Ascending aorta (tissue), 2 donors: ENCODE measurements at regions of chr4 and their contacts with region 1.

Region 1: GRCh38 chr4:74444891-74445642 is at the start of gene AREG:
- DNase-seq: peak; percentile 54 to 90
- H3K4me3 ChIP-seq: peak within 1 kb of the TSS; percentile 64 to 67
- H3K27ac ChIP-seq: peak within 1 kb of the TSS; percentile 52 to 66
- H3K4me1 ChIP-seq: no peaks in the 10 kb centered on the region
- H3K27me3 ChIP-seq: no peaks in the 10 kb centered on the region
- CTCF ChIP-seq: peak in 2 of 3 experiments; percentile 36 to 61
- total RNA-seq, gene AREG: 4.0 TPM

Region 2: DNA sequence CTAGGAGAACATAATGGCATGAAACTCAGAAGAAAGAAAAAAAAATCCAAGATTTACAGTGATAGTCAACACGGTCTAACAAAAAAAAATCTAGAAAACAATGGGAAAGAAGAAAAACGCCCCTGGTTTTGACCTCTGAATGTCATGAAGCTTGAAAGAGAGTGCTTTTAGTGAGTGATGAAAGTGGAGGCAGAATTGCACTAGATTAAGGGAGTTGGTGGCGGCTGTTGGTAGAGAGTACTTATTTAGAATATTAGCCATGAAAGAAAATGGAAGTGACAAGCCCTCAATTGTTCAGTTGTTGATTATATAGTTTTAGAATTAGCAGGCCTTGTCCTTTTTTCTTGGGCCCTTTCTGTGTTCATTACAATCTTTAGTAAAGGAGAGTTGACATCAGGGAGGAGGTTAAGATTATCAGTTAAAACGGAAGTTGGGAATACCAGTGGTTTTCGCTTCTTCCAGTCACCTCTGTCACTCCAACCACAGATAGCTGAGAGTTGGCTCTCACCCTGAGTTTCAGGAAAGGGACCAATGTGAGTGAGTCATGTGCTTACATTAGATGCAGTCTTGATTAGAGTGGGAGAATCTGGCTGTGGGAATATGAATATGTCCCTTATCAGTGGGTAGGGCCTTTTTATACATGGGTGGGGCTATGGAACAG is 50.5 kb before region 1 on chr4:
- intact Hi-C with region 1: no loop called
- DNase-seq: no peak
- H3K4me3 ChIP-seq: no peak overlapping the region
- H3K27ac ChIP-seq: no peak overlapping the region
- H3K4me1 ChIP-seq: no peaks in the 10 kb centered on the region
- H3K27me3 ChIP-seq: no peaks in the 10 kb centered on the region
- CTCF ChIP-seq: no peak

Region 3: GRCh38 chr4:74473155-74473811 is 28.2 kb after region 1 on chr4:
- intact Hi-C with region 1: loop called (anchors 2 kb)
- DNase-seq: peak in 1 of 2 donors; percentile 67
- H3K4me3 ChIP-seq: no peak overlapping the region
- H3K27ac ChIP-seq: peak overlapping the region; percentile 66 to 68
- H3K4me1 ChIP-seq: peaks cover 0 to 15% of the 10 kb centered on the region in 2 donors
- H3K27me3 ChIP-seq: no peaks in the 10 kb centered on the region
- CTCF ChIP-seq: no peak